AG04449 (cell line): ENCODE measurements at regions of chr9 and their contacts with region 1.

Region 1: GRCh38 chr9:18442629-18443491 is 31.1 kb upstream of the ADAMTSL1 start:
- DNase-seq: no peak
- H3K4me3 ChIP-seq: no peak overlapping the region
- CTCF ChIP-seq: peak; percentile 84

Region 2: GRCh38 chr9:17653947-17654465 is 788.9 kb before region 1 on chr9:
- CTCF ChIA-PET with region 1: no interaction called
- POLR2A ChIA-PET with region 1: no interaction called
- DNase-seq: no peak
- H3K4me3 ChIP-seq: no peak overlapping the region
- CTCF ChIP-seq: no peak

Region 3: GRCh38 chr9:18007621-18008020 is 435.2 kb before region 1 on chr9:
- CTCF ChIA-PET with region 1: no interaction called
- POLR2A ChIA-PET with region 1: no interaction called
- DNase-seq: no peak
- H3K4me3 ChIP-seq: no peak overlapping the region
- CTCF ChIP-seq: no peak

Region 4: DNA sequence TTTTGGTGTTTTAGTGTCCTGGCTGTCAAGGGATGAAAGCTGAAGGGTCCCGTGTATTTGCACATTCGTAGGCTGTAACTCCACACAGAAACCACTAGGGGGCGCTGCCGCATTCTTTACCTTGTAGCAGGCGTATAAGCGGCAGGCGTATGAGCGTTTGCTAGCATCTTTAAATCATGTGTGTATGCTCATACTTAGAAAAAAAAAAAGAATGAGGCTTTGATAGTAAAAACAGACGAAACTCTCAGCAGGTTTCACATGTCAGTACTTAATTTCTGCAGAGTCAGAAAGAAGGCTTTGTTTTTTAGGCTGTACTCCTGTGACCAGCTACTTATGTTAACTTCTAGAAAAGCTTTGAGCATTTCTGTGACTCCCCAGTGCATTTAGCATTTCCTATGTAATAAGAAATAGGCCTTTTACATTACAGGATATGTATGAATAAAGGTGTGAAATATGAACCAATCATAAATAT is 187.7 kb before region 1 on chr9:
- CTCF ChIA-PET with region 1: interaction called, 239 read pairs
- POLR2A ChIA-PET with region 1: no interaction called
- DNase-seq: peak; percentile 41
- H3K4me3 ChIP-seq: no peak overlapping the region
- CTCF ChIP-seq: peak; percentile 83

Region 5: DNA sequence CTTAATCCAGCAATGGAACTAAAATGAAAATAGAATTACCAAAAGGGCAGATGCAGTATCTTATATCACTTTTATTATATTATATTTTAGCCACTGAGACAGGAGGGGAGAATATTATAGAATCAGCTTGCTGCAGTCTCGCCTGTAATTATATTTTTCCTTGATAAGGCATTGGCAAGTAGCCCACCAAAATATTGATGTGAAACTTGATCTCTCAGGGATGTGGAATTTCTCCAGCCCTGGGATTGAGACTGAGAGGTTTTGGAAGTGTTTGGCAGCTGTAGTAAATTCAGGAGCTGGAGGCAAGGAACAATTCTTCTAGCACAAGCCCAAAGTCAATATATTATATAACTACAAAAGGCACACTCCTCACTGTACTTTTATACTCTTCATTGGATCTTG is 111.1 kb before region 1 on chr9:
- CTCF ChIA-PET with region 1: interaction called, 11 read pairs
- POLR2A ChIA-PET with region 1: no interaction called
- DNase-seq: no peak
- H3K4me3 ChIP-seq: no peak overlapping the region
- CTCF ChIP-seq: no peak

Region 6: GRCh38 chr9:18393340-18394130 is 49.3 kb before region 1 on chr9:
- CTCF ChIA-PET with region 1: interaction called, 10 read pairs
- POLR2A ChIA-PET with region 1: no interaction called
- DNase-seq: peak; percentile 90
- H3K4me3 ChIP-seq: no peak overlapping the region
- CTCF ChIP-seq: no peak

Region 7: DNA sequence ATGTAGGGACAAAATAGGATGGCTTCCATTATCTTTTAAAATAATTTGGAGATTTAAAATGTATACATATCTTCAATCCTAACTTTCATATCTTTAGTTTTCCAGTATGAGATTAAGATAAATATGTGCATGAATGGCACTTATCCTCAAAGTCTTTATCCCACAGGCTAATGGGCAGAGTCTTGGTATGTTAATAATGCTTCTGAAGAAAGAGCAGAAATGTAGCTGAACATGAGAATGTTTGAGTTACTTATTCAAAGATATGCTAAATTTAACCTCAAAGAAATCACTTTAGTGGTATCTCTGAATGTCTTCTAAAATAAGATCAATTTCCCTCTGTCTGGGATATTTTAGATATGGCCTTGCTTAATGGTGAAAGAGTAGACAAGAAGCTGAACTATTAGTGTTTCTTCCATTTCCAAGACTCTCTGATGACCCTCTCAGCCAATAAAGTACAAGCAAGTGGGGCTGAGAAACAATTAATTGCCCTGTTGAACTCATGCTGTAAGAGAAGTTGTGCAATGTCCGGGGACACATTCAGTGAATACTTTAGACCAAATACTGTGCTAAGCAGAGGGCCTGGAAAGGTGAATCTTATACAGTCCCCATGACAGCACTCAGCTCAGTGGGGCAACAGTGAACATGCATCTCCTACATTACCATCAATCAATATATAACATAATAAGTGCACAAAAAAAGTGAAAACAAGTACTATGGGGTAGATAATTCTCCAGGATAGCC is 18.9 kb before region 1 on chr9:
- CTCF ChIA-PET with region 1: interaction called, 37 read pairs
- POLR2A ChIA-PET with region 1: interaction called, 4 read pairs
- DNase-seq: no peak
- H3K4me3 ChIP-seq: no peak overlapping the region
- CTCF ChIP-seq: no peak

Region 8: DNA sequence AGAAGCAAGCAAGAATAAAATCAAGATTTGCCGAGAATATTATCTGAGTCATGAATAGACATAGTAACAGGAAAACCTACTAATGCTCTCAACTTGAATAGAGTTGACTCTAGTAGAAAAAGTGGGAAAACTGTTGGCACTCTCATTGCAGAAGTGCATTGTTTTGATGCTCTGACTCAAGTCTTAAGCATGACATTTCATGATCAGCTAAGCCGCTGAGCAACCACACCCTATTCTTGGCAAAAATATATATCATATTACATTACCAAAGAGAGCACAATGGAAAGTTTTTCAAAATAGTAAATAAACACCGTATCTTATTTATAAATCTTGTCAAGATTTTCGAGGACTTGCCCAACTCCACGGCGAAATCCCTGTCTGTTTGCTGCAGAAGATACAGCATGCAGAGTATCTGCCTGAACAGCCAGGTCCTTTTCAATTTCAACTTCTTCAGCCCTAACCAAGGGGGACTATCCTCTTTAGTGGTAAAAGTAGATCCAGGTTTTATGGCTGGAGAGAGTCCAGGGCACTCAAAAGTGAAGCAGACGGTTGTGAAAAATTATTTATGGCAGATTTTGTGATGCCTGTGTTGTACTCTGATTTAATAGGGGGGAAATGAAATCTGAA is 17.2 kb after region 1 on chr9:
- CTCF ChIA-PET with region 1: interaction called, 197 read pairs
- POLR2A ChIA-PET with region 1: no interaction called
- DNase-seq: no peak
- H3K4me3 ChIP-seq: no peak overlapping the region
- CTCF ChIP-seq: no peak

Region 9: GRCh38 chr9:19028835-19029451 is 586.1 kb after region 1 on chr9:
- CTCF ChIA-PET with region 1: interaction called, 19 read pairs
- POLR2A ChIA-PET with region 1: no interaction called
- DNase-seq: peak; percentile 12
- H3K4me3 ChIP-seq: no peak overlapping the region
- CTCF ChIP-seq: peak; percentile 47